ENCODE measurements at regions of chr9 and their contacts with region 1.

Region 1: DNA sequence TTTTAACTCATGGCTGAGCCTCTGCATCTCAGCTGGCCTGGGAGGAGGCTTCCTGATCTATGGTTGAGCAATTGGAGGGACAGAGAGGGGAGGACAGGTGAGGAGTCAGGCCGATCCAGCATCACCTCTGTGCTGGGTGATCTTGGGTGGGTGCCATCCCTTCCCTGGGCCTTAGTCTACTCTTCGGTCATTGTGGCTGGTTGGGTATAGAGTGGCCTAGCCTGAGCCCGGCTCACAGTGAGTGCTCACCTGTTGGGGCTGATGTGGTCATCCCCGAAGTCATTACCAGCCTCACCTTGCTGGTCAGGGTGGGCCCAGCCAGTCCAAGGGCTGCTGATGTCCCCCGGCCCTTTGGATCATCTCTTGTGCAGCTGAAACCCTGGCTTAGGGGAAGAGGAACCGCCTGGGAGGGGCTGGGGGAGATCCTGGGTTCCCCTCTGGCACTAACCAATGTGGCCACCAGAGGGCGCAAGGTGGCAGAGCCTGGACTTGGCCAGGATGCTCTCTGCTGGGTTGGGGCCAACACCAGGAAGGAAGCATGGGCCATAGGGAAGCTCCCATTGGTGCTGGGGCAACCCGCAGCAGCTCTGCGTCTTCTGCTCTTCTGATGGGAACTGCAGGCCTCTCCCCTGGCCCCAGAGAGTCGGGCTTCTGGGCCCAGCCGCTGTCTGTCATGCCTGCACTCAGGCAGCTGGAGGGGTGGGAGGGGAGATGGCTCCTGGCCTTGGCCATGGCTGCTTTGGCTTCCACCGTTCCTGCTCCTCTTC is 17.3 kb upstream of the ODF2 start:
- DNase-seq: peak; percentile 77
- ATAC-seq: peak; percentile 97
- H3K4me3 Mint-ChIP-seq: no peak overlapping the region
- H3K27ac Mint-ChIP-seq: no peak overlapping the region
- H3K4me1 Mint-ChIP-seq: peaks cover 5% of the 10 kb centered on the region
- H3K27me3 Mint-ChIP-seq: no peaks in the 10 kb centered on the region
- CTCF ChIP-seq: peak; percentile 16

Region 2: DNA sequence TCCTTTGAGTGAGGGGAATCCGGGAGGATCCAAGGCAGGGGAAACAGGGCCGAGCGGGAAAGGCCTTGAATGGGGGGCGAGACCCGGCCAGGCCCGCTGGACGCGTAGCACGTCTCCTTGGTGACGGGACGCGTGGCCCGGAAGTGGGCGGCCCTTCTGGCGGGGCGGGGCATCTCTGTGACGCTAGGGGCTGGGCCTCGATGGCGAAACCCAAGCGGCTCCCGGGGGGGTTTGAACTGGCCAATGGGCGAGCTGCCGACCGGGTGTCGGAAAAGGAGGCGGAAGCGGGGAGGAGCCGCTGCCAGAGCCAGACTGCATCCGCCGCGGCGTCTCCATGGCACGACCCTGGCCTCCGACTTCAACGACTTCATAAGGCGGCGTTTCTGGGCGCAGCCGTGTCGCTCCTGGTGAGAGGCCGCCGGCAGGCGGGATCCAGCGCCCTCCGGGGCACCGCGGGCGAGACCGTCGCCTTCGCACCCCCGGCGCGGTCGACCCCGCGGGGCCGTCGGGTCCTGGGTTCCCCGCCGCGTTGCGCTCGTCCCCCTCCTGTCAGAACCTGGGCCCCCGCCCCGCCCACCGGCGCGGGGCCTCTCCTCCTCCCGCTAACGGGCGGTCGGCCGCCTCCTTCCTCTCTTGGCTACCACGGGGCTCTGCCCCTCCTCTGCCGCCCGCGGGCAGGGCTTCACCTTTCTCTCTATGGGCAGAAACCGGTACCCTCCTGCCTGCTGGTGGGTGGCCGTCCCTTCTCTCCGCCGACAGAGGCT is 17.5 kb after region 1 on chr9 and contains the start of gene ODF2:
- CTCF ChIA-PET with region 1: interaction called, 5 read pairs
- POLR2A ChIA-PET with region 1: no interaction called
- intact Hi-C with region 1: loop called (anchors 2 kb)
- DNase-seq: peak; percentile 99
- ATAC-seq: peak; percentile 88
- H3K4me3 Mint-ChIP-seq: peak within 1 kb of the TSS; percentile 88
- H3K27ac Mint-ChIP-seq: peak within 1 kb of the TSS; percentile 83
- H3K4me1 Mint-ChIP-seq: peaks cover 14% of the 10 kb centered on the region
- H3K27me3 Mint-ChIP-seq: no peaks in the 10 kb centered on the region
- CTCF ChIP-seq: no peak
- total RNA-seq, gene ODF2: 41.2 and 45.7 TPM in 2 replicates

Measured in activated B cell treated with CpG ODN at 0.5 μM for 24 hours (primary cell).